Right ventricle myocardium inferior (tissue), 1 donor: ENCODE measurements at regions of chr2 and their contacts with region 1.

Region 1: GRCh38 chr2:37672104-37672869 is 845 bp upstream of the CDC42EP3 start:
- DNase-seq: peak; percentile 79
- ATAC-seq: peak; percentile 58

Region 2: DNA sequence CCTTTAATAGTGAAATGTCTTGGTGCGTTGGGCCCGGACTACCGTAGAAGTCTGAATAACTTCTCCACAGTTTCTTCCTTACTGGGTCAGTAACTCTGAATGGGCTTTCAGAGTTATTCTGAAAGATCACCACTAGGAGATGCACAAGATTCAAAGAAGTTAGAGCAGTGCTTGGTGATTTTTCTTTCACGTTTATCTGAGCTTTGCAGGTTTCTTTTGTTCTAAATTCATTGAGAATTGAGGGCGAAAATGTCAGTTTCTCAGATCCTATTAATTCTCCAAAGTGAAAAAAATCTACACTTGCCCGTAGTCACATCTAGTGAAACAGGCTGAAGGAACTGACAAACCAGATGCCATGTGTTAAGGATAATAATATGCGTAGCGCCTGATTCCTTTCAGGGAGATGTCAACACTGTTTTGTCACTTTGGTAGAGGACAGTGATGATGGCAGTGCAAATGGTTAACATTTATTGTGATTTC is 257.8 kb before region 1 on chr2:
- intact Hi-C with region 1: loop called (anchors 2 kb)
- DNase-seq: no peak
- ATAC-seq: peak; percentile 75

Region 3: DNA sequence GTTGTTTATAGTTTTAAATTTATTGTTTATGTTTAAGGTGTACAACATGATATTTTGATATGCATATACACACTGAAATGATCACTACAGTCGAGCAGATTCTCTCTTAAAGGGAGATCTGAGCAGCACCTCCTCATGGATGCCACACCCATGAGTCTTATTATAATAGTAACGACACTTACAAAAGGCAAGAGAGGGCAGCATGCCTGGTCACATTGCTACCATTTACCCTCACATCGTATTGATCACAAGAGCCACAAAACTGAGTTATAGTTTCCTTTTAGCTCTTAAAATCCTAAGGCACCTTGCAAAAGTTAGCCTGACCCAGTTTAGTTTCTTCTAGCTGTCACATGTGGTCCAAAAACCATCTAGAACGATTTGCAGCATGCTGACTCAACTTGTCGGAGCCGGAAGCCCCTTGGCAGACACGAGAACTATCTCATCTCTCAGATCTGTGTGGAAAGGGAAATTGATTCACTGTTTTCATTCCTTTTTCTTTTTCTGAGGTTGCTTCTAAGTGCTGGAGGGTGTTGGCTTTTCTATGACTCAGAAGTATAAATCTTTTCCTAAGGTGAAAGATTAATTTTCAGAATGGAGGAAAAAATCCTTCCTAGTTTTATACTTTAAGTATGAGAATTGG is 86.2 kb before region 1 on chr2:
- intact Hi-C with region 1: loop called (anchors 5 kb)
- DNase-seq: no peak
- ATAC-seq: peak; percentile 27

Region 4: DNA sequence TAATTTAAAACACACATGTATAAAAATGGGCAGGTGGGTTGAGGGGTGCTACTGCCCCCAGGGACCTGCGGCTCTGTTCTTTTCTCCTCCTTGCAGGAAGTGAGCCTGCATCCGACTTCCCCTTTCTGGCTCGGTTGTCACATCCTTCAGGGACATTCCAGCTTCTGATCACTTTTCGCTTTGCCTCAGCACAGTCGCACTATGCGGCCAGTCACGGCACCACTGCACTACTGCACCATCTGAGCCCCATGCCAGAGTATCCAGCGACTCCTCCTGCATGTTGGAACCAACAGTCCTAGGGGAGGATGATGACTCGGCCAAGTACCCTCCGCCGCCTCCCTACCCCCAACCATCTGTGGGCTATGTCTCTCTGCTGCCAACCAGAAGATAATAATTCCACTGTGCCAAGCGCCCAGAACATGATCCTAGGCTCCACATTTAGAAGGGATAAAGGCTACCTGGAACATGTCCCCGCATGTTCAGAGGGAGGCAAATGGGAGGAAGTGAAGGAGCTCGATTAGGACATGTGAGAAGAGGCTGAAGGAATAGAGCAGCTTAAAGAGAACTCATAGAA is 18.4 kb before region 1 on chr2:
- intact Hi-C with region 1: loop called (anchors 1 kb)
- DNase-seq: peak; percentile 76
- ATAC-seq: peak; percentile 84

Region 5: DNA sequence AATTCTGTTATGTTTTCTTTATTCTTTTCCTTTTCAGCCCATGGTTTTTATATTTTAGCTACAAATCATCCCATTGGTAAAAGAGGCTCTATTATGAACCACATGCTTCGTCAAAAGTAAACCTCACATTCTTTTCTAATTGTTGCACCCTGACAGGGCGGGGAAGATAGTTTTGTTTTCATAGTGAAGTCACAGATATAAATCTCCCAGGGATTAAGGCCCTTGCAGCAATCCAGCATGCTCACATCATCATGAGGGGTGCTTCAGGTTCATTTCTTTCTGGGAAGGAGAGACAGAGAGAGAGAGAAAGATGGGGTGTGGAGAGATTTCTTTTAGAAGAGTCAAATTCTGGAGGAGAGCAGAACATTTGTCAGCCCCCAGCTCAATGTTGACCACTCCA is 123.7 kb after region 1 on chr2:
- intact Hi-C with region 1: loop called (anchors 10 kb)
- DNase-seq: no peak
- ATAC-seq: no peak

Region 6: GRCh38 chr2:37832590-37833197 is 160.4 kb after region 1 on chr2:
- intact Hi-C with region 1: loop called (anchors 2 kb)
- DNase-seq: peak; percentile 93
- ATAC-seq: peak; percentile 81

Region 7: DNA sequence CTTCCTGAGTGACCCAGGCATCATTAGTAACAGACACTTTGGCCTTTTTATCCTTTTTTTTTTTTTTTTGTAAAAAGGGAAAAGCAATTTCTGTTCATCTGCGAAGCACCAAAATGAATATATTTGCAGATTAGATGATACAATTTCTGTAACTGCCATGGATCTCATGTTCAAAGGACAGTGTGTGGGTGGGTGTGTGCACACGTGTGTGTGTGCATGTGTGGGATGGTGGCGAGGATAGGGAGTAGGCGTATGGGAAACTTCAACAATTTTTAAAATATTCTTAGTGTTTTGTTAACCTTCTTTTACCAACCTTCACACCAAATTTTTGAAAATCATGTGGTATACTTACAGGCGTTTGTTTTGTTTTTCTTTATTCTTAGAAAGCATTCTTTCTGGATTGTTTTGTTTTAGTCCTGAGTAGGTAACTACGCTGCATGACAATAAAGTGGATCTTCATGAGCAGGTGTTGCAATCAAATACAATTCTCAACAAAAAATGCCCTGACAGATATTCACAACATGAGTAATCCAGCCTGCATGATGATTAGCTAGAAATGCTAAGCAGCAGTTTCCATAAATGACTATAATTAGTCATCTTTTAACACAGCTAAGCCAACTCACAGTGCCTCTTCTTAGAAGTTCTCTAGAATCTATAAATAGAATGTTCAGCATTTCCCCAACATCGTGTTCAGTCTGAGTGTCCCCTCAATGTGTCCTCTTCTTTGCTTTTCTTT is 199.3 kb after region 1 on chr2:
- intact Hi-C with region 1: loop called (anchors 2 kb)
- DNase-seq: no peak
- ATAC-seq: no peak